HEK293 (cell line): ENCODE measurements at regions of chr17 and their contacts with region 1.

Region 1: DNA sequence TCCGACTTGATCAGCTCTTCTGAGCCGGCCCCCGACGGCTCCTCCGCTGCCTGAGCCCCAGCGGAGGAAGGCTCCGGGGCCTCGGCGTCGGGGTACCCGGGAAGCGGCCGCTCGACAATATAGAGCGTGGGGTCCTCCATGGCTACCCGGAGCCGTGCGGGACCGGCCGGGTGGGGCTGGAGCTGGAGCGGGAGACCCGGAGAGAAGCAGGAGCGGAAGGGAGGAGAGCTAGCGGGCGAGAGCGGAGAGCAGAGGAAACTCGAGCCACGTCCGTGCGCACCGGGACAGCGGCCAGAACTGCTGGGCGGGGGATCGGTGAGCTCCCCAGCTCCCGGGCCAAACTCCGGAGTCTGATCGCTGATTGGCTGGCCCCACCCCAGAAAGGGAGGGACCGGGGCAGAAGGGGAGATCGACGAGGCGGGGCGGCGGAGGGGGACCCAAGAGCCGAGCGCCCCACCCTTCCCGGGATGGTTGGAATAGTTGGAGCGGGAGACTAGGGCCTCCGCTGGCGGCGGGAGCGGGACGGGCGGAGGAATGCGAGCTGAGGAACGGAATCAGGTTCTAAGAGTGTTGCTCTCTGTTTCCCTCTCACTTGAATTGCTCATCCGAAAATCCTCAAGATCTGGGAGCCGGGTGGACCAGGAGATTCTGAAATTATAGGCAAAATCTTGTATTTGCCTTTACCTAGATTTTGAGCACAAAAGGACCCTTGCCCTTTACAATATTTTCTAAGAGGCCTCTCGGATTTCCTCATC is at the start of gene CAVIN1:
- H3K4me3 ChIP-seq: peak within 1 kb of the TSS; percentile 79
- H3K27ac ChIP-seq: peak within 1 kb of the TSS; percentile 38; the same call in 1 of the 2 replicates
- H3K4me1 ChIP-seq: peaks cover 2% of the 10 kb centered on the region
- CTCF ChIP-seq: no peak

Region 2: GRCh38 chr17:42388381-42389134 is 34.6 kb before region 1 on chr17 and contains the start of gene STAT3:
- CTCF ChIA-PET with region 1: no interaction called
- POLR2A ChIA-PET with region 1: interaction called, 73 read pairs
- H3K4me3 ChIP-seq: peak within 1 kb of the TSS; percentile 95
- H3K27ac ChIP-seq: peak within 1 kb of the TSS; percentile 73
- H3K4me1 ChIP-seq: peaks cover 8% of the 10 kb centered on the region
- CTCF ChIP-seq: 0 out of 2 replicates have a peak, but pooled peaks have one; percentile 57

Region 3: GRCh38 chr17:42438600-42439567 is 15.7 kb after region 1 on chr17:
- CTCF ChIA-PET with region 1: interaction called, 5 read pairs
- POLR2A ChIA-PET with region 1: interaction called, 25 read pairs
- H3K4me3 ChIP-seq: no peak overlapping the region
- H3K27ac ChIP-seq: no peak overlapping the region
- H3K4me1 ChIP-seq: peaks cover 2% of the 10 kb centered on the region; the same call in 1 of the 2 replicates
- CTCF ChIP-seq: no peak; the same call in 1 of the 2 replicates

Region 4: GRCh38 chr17:42517516-42517915 is 94.4 kb after region 1 on chr17:
- CTCF ChIA-PET with region 1: interaction called, 28 read pairs
- POLR2A ChIA-PET with region 1: interaction called, 48 read pairs
- H3K4me3 ChIP-seq: no peak overlapping the region
- H3K27ac ChIP-seq: no peak overlapping the region
- H3K4me1 ChIP-seq: peaks cover 25% of the 10 kb centered on the region
- CTCF ChIP-seq: peak; percentile 94

Region 5: DNA sequence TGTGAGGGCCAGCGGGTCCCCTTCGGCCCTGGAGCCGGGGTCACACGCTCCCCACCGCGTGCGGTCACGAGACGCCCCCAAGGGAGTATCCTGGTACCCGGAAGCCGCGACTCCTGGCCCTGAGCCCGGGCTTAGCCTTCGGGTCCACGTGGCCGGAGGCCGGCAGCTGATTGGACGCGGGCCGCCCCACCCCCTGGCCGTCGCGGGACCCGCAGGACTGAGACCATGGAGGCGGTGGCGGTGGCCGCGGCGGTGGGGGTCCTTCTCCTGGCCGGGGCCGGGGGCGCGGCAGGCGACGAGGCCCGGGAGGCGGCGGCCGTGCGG is 112.9 kb after region 1 on chr17 and contains the start of gene NAGLU:
- CTCF ChIA-PET with region 1: interaction called, 6 read pairs
- POLR2A ChIA-PET with region 1: interaction called, 11 read pairs
- H3K4me3 ChIP-seq: peak within 1 kb of the TSS; percentile 44
- H3K27ac ChIP-seq: peak within 1 kb of the TSS; percentile 98
- H3K4me1 ChIP-seq: peaks cover 13% of the 10 kb centered on the region
- CTCF ChIP-seq: no peak

Region 6: GRCh38 chr17:42598905-42599304 is 175.8 kb after region 1 on chr17:
- CTCF ChIA-PET with region 1: no interaction called
- POLR2A ChIA-PET with region 1: no interaction called
- H3K4me3 ChIP-seq: no peak overlapping the region
- H3K27ac ChIP-seq: no peak overlapping the region
- H3K4me1 ChIP-seq: peaks cover 3% of the 10 kb centered on the region; the same call in 1 of the 2 replicates
- CTCF ChIP-seq: no peak

Region 7: DNA sequence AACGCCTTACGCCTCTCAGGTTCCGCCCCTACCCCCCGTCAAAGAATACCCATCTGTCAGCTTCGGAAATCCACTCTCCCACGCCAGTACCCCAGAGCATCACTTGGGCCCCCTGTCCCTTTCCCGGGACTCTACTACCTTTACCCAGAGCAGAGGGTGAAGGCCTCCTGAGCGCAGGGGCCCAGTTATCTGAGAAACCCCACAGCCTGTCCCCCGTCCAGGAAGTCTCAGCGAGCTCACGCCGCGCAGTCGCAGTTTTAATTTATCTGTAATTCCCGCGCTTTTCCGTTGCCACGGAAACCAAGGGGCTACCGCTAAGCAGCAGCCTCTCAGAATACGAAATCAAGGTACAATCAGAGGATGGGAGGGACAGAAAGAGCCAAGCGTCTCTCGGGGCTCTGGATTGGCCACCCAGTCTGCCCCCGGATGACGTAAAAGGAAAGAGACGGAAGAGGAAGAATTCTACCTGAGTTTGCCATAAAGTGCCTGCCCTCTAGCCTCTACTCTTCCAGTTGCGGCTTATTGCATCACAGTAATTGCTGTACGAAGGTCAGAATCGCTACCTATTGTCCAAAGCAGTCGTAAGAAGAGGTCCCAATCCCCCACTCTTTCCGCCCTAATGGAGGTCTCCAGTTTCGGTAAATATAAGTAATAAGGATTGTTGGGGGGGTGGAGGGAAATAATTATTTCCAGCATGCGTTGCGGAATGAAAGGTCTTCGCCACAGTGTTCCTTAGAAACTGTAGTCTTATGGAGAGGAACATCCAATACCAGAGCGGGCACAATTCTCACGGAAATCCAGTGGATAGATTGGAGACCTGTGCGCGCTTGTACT is 702.2 kb after region 1 on chr17 and contains the start of gene BRCA1:
- CTCF ChIA-PET with region 1: no interaction called
- POLR2A ChIA-PET with region 1: no interaction called
- H3K4me3 ChIP-seq: peak within 1 kb of the TSS; percentile 75
- H3K27ac ChIP-seq: peak within 1 kb of the TSS; percentile 69
- H3K4me1 ChIP-seq: peaks cover 4% of the 10 kb centered on the region; the same call in 1 of the 2 replicates
- CTCF ChIP-seq: no peak